ENCODE measurements at regions of chr9 and their contacts with region 1.

Region 1: DNA sequence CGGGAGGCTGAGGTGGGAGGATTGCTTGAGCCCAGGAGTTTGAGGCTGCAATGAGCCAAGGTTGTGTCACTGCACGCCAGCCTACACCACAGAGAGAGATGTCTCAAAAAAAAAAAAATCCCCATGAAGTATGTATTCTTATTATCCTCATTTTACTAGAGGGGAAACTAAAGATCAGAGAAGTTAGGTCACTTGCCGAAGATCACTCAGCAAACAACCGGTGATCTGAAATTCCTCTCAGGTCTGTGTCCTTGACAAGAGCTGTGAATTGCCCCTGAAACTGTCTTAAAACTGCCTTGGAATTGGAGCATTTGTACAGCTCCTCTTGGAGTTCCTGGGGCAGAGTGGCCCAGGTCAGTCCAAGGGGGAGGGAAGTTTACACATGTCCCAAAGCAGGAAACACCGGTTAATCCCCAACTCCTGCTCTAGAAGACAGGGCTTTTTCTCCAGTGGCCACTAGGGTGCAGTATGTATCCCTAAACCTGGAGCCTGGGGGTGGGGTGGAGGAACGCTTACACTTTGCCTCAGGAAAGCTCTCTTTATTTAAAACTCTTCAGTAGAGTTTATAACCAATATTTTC is 27.6 kb downstream of the AQP7 start:
- DNase-seq: peak; percentile 79
- H3K4me3 Mint-ChIP-seq: no peak overlapping the region
- H3K27ac Mint-ChIP-seq: no peak overlapping the region
- H3K4me1 Mint-ChIP-seq: peaks cover 4% of the 10 kb centered on the region
- H3K27me3 Mint-ChIP-seq: no peaks in the 10 kb centered on the region

Region 2: GRCh38 chr9:33355933-33356332 is 18.8 kb before region 1 on chr9:
- CTCF ChIA-PET with region 1: interaction called, 30 read pairs
- POLR2A ChIA-PET with region 1: no interaction called
- intact Hi-C with region 1: no loop called
- DNase-seq: no peak
- H3K4me3 Mint-ChIP-seq: no peak overlapping the region
- H3K27ac Mint-ChIP-seq: no peak overlapping the region
- H3K4me1 Mint-ChIP-seq: no peaks in the 10 kb centered on the region
- H3K27me3 Mint-ChIP-seq: no peaks in the 10 kb centered on the region

Region 3: DNA sequence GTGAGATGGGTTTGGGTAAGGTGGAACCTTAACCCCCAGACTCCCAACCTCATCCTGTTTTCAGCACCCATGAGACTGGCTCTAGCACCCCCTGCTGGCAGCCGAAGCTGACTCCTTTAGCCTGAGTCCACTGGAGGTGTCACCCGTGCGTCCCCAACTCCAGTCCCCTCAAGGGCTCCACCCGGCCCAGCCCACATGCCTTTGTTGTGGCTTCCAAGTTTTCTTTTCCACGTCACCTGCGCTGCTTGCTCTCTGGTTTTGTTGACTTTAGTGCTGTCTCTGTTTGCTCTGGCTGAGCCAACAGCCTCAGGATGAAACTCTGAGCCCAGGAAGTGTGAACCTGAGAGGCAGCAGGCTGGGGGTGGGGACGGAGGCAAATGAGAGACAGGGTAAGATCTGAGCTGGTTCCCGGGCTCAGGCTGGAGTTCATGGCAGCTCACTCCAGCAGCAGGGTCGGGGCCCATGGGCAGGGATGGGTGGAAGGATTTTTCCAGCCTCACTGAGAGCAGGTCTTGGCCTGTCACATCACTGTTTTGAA is 40.8 kb after region 1 on chr9:
- CTCF ChIA-PET with region 1: interaction called, 40 read pairs
- POLR2A ChIA-PET with region 1: no interaction called
- intact Hi-C with region 1: loop called (anchors 1 kb)
- DNase-seq: peak; percentile 97
- H3K4me3 Mint-ChIP-seq: peak overlapping the region; percentile 33
- H3K27ac Mint-ChIP-seq: peak overlapping the region; percentile 95
- H3K4me1 Mint-ChIP-seq: peaks cover 52% of the 10 kb centered on the region
- H3K27me3 Mint-ChIP-seq: no peaks in the 10 kb centered on the region

Region 4: GRCh38 chr9:33452828-33453271 is 78.1 kb after region 1 on chr9:
- CTCF ChIA-PET with region 1: interaction called, 36 read pairs
- POLR2A ChIA-PET with region 1: no interaction called
- intact Hi-C with region 1: no loop called
- DNase-seq: peak; percentile 79
- H3K4me3 Mint-ChIP-seq: peak overlapping the region; percentile 20
- H3K27ac Mint-ChIP-seq: peak overlapping the region; percentile 78
- H3K4me1 Mint-ChIP-seq: peaks cover 65% of the 10 kb centered on the region
- H3K27me3 Mint-ChIP-seq: no peaks in the 10 kb centered on the region

Region 5: GRCh38 chr9:33473643-33474352 is 99.1 kb after region 1 on chr9 and contains the start of gene NOL6:
- CTCF ChIA-PET with region 1: interaction called, 84 read pairs
- POLR2A ChIA-PET with region 1: no interaction called
- intact Hi-C with region 1: no loop called
- DNase-seq: peak; percentile 99
- H3K4me3 Mint-ChIP-seq: peak within 1 kb of the TSS; percentile 99
- H3K27ac Mint-ChIP-seq: peak within 1 kb of the TSS; percentile 93
- H3K4me1 Mint-ChIP-seq: peaks cover 24% of the 10 kb centered on the region
- H3K27me3 Mint-ChIP-seq: no peaks in the 10 kb centered on the region
- total RNA-seq, gene NOL6: 38.1 to 39.7 TPM

Measured in activated CD4-positive, alpha-beta memory T cell treated with anti-CD3 and anti-CD28 coated beads for 36 hours (primary cell).